K562 (cell line): ENCODE measurements at regions of chr2 and their contacts with region 1.

Region 1: DNA sequence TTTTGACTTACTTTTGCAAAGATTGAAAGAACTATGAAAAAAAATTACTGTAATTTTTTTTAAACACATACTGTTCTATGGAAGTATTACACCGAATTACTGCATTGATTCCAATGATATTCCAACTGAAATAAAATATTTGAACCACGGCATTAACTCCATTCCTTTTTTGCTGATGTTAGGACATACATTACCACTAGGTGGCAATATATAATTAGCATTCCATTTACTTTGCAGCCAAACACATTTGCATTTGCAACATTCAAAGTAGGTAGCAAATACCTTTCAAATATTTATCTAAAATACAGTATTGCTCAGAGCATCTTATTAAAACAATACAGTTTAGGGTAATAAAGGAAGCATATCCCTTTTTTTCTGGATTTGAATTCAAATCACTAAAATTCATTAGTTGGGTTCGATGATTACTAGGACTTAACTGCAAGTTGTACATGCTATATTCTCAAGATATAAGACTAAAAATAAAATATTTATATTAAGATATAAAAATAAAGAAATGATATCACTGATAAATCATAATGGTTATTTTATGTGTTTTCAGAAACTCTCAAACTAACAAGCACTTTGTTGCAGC is 31.3 kb downstream of the LANCL1 start:
- DNase-seq: peak; percentile 8 to 14 (median 12)
- ATAC-seq: peak; percentile 52; the same call in 1 of the 3 replicates
- H3K4me3 ChIP-seq: no peak overlapping the region
- H3K27ac ChIP-seq: no peak overlapping the region
- H3K4me1 ChIP-seq: no peaks in the 10 kb centered on the region
- H3K27me3 ChIP-seq: no peaks in the 10 kb centered on the region
- CTCF ChIP-seq: peak in 2 of 3 experiments; percentile 32 to 55; a peak in 3 of 6 replicates
- EP300 ChIP-seq: no peak
- POLR2A ChIP-seq: no peak
- RAD21 ChIP-seq: peak; percentile 36 to 56

Region 2: GRCh38 chr2:210541290-210541902 is 96.2 kb after region 1 on chr2:
- CTCF ChIA-PET with region 1: no interaction called
- POLR2A ChIA-PET with region 1: no interaction called
- in situ Hi-C with region 1: no loop called
- intact Hi-C with region 1: no loop called
- DNase-seq: peak in 1 of 4 experiments; percentile 1
- ATAC-seq: no peak
- H3K4me3 ChIP-seq: no peak overlapping the region
- H3K27ac ChIP-seq: no peak overlapping the region
- H3K4me1 ChIP-seq: no peaks in the 10 kb centered on the region
- H3K27me3 ChIP-seq: no peaks in the 10 kb centered on the region
- CTCF ChIP-seq: no peak
- EP300 ChIP-seq: no peak
- POLR2A ChIP-seq: no peak
- RAD21 ChIP-seq: no peak

Region 3: GRCh38 chr2:210577263-210578071 is 132.3 kb after region 1 on chr2:
- CTCF ChIA-PET with region 1: no interaction called
- POLR2A ChIA-PET with region 1: no interaction called
- in situ Hi-C with region 1: no loop called
- intact Hi-C with region 1: loop called (anchors 5 kb)
- DNase-seq: peak; percentile 19 to 41 (median 34)
- ATAC-seq: peak; percentile 80
- H3K4me3 ChIP-seq: no peak overlapping the region
- H3K27ac ChIP-seq: no peak overlapping the region
- H3K4me1 ChIP-seq: no peaks in the 10 kb centered on the region
- H3K27me3 ChIP-seq: no peaks in the 10 kb centered on the region
- CTCF ChIP-seq: peak in 2 of 3 experiments; percentile 51 to 63; a peak in 4 of 6 replicates
- EP300 ChIP-seq: no peak
- POLR2A ChIP-seq: no peak
- RAD21 ChIP-seq: peak; percentile 26 to 61; a peak in 3 of 4 replicates

Region 4: GRCh38 chr2:211157856-211158463 is 712.7 kb after region 1 on chr2:
- CTCF ChIA-PET with region 1: no interaction called
- POLR2A ChIA-PET with region 1: no interaction called
- in situ Hi-C with region 1: no loop called
- intact Hi-C with region 1: loop called (anchors 5 kb)
- DNase-seq: peak; percentile 6 to 63 (median 18)
- ATAC-seq: peak; percentile 75
- H3K4me3 ChIP-seq: no peak overlapping the region
- H3K27ac ChIP-seq: no peak overlapping the region
- H3K4me1 ChIP-seq: no peaks in the 10 kb centered on the region
- H3K27me3 ChIP-seq: no peaks in the 10 kb centered on the region
- CTCF ChIP-seq: peak in 2 of 3 experiments; percentile 49 to 52; a peak in 3 of 6 replicates
- EP300 ChIP-seq: no peak
- POLR2A ChIP-seq: no peak
- RAD21 ChIP-seq: peak; percentile 25 to 53; a peak in 3 of 4 replicates